Activated CD4-positive, alpha-beta T cell treated with anti-CD3 and anti-CD28 coated beads for 36 hours (primary cell): ENCODE measurements at regions of chr16 and their contacts with region 1.

Region 1: GRCh38 chr16:72832621-72833248 is 215.2 kb downstream of the ZFHX3 start:
- DNase-seq: peak; percentile 82
- ATAC-seq: peak; percentile 63
- H3K4me3 Mint-ChIP-seq: no peak overlapping the region
- H3K27ac Mint-ChIP-seq: no peak overlapping the region
- H3K4me1 Mint-ChIP-seq: no peaks in the 10 kb centered on the region
- H3K27me3 Mint-ChIP-seq: no peaks in the 10 kb centered on the region

Region 2: DNA sequence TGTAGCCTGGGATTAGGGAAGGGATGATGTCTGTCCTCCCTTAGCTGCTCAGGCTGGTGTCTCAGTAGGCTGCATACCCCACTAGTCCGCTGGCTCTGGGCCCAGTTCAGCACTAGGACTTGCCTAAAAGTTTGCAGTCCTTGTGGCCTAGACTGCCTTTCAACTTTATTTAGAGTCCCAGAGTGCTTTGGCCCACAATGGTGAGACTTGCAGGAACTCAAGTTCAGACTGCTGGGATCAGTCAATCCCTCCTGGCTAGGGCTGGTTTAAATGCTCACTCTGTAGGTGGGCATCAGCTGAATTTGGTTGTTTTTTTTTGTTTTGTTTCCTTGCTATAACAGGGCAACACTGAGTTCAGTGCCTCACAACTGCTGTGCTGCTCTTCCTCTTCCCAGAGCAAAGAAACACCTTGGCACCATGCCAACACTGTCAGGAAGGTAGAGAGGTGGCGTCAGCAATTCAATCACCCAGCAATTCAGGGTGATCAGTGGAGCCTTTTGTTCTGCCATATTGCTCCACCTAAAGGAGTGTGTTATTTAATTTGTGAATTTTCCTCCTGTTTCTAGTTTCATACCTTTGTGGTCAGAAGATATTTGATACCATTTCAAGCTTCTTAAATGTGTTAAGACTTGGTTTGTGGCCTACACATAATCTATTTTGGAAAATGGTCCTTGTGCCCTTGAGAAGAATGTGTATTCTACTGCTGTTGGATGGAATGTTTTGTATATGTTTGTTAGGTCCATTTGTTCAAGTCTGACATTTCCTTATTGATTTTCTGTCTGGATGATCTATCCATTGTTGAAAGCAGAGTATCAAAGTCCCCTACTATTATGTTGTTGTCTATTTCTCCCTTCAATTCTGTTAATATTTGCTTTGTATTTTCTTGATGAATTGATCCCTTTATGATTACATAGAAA is 376.7 kb before region 1 on chr16:
- CTCF ChIA-PET with region 1: no interaction called
- POLR2A ChIA-PET with region 1: no interaction called
- intact Hi-C with region 1: no loop called
- DNase-seq: peak; percentile 8
- ATAC-seq: no peak
- H3K4me3 Mint-ChIP-seq: no peak overlapping the region
- H3K27ac Mint-ChIP-seq: no peak overlapping the region
- H3K4me1 Mint-ChIP-seq: no peaks in the 10 kb centered on the region
- H3K27me3 Mint-ChIP-seq: no peaks in the 10 kb centered on the region

Region 3: DNA sequence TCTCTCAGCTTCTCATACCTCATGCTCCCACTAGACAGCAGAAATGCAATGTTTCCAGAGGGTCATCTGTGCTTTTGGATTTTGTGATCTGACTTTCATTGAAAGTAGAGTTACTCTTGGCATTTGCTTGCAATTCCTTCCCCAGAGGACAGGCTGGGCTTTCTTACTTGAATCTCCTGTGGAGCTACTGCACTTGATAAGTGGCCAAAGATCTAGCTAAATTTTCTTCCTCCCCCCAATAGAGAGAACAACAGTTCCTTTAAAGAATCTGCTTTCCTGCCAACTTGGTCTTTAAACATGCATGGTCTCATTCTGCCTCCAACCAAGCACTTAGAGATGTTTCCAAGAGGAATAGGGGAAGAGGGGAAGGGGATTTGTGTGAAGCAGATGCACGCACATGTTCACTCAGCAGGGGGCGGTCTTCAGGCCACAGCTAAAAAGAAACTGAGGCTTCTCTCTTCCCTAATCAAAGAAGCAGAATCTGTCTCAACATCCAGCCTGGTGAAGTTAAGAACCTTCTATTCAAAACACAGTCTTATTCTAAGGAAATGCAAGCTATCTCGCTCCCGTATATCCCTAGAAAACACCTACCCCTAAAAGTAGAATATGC is 14.4 kb before region 1 on chr16:
- CTCF ChIA-PET with region 1: interaction called, 22 read pairs
- POLR2A ChIA-PET with region 1: no interaction called
- intact Hi-C with region 1: no loop called
- DNase-seq: no peak
- ATAC-seq: no peak
- H3K4me3 Mint-ChIP-seq: no peak overlapping the region
- H3K27ac Mint-ChIP-seq: no peak overlapping the region
- H3K4me1 Mint-ChIP-seq: no peaks in the 10 kb centered on the region
- H3K27me3 Mint-ChIP-seq: peaks cover 9% of the 10 kb centered on the region

Region 4: DNA sequence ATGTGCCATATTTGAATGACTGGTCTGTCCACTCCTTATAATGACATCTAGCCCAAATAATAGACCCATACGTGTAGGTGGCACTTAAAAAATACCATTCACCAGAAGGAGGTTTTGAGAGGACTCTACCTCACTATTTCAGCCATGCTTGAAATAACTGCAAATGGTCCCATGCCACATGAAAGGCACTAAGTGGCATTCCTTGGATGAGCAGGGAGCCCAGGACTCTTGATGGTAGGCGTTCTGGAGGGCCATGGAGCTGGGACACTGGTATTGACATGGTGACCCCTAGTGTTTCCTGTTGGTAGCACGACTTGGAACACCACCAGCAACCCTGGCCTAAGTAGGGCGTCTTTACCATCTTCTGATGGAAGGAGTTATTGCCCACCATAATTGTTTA is 363.9 kb after region 1 on chr16:
- CTCF ChIA-PET with region 1: no interaction called
- POLR2A ChIA-PET with region 1: no interaction called
- intact Hi-C with region 1: loop called in 1 of 2 experiments (anchors 1 kb)
- DNase-seq: peak; percentile 45
- ATAC-seq: no peak
- H3K4me3 Mint-ChIP-seq: no peak overlapping the region
- H3K27ac Mint-ChIP-seq: no peak overlapping the region
- H3K4me1 Mint-ChIP-seq: no peaks in the 10 kb centered on the region
- H3K27me3 Mint-ChIP-seq: no peaks in the 10 kb centered on the region

Region 5: GRCh38 chr16:73298562-73298961 is 465.8 kb after region 1 on chr16:
- CTCF ChIA-PET with region 1: no interaction called
- POLR2A ChIA-PET with region 1: no interaction called
- intact Hi-C with region 1: no loop called
- DNase-seq: no peak
- ATAC-seq: no peak
- H3K4me3 Mint-ChIP-seq: no peak overlapping the region
- H3K27ac Mint-ChIP-seq: no peak overlapping the region
- H3K4me1 Mint-ChIP-seq: no peaks in the 10 kb centered on the region
- H3K27me3 Mint-ChIP-seq: no peaks in the 10 kb centered on the region

Region 6: DNA sequence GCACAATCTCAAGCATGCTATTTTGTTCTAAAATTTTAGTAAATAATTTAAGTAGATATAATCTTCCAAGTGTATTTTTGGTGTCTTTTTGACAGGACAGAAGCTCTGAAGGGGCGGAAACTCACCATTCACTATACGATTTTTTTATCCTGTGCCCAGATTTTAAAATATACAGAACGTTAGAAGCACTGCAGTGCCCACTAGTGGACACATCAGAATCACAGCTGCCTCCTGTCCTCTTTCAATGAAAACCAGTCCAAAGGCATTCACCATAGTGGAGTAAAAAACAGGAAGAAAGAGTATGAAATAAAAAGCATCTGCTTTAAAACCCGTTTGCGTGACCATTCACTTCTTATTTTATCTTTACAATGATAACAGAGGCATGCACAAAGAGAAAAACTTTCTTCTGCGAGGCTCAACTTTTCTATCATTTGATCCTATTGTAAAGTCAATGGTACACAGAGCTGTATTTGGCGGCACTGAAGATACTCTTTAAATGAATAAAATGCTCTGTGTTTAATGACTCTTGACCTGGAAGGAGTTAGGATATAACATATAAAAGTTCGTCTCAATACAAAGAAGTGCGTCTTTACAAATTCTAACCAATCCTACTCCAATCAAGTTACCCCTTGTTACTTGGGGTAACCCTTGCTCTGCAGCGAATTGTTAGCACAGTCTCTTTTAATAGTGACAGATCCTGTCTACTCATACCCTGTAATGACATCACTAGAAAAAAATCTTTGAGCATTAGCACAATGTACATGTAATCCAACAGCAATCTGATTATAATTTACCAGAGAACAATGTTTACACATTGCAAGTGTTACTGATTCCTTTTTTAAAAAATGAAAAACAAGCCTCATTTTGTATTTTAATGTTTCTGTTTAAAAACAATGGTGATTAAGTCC is 1124.1 kb after region 1 on chr16:
- CTCF ChIA-PET with region 1: no interaction called
- POLR2A ChIA-PET with region 1: no interaction called
- intact Hi-C with region 1: loop called in 1 of 2 experiments (anchors 2 kb)
- DNase-seq: peak; percentile 62
- ATAC-seq: no peak
- H3K4me3 Mint-ChIP-seq: no peak overlapping the region
- H3K27ac Mint-ChIP-seq: no peak overlapping the region
- H3K4me1 Mint-ChIP-seq: no peaks in the 10 kb centered on the region
- H3K27me3 Mint-ChIP-seq: peaks cover 5% of the 10 kb centered on the region